Prostate gland (tissue), 2 donors: ENCODE measurements at regions of chr12 and their contacts with region 1.

Region 1: GRCh38 chr12:51531978-51532497 is 59.0 kb upstream of the SCN8A start:
- DNase-seq: peak; percentile 68
- H3K4me3 ChIP-seq: no peak overlapping the region
- H3K27ac ChIP-seq: no peak overlapping the region
- H3K4me1 ChIP-seq: no peaks in the 10 kb centered on the region
- H3K27me3 ChIP-seq: peaks cover 6% of the 10 kb centered on the region
- CTCF ChIP-seq: peak; percentile 61 to 86 (median 67)
- POLR2A ChIP-seq: no peak

Region 2: DNA sequence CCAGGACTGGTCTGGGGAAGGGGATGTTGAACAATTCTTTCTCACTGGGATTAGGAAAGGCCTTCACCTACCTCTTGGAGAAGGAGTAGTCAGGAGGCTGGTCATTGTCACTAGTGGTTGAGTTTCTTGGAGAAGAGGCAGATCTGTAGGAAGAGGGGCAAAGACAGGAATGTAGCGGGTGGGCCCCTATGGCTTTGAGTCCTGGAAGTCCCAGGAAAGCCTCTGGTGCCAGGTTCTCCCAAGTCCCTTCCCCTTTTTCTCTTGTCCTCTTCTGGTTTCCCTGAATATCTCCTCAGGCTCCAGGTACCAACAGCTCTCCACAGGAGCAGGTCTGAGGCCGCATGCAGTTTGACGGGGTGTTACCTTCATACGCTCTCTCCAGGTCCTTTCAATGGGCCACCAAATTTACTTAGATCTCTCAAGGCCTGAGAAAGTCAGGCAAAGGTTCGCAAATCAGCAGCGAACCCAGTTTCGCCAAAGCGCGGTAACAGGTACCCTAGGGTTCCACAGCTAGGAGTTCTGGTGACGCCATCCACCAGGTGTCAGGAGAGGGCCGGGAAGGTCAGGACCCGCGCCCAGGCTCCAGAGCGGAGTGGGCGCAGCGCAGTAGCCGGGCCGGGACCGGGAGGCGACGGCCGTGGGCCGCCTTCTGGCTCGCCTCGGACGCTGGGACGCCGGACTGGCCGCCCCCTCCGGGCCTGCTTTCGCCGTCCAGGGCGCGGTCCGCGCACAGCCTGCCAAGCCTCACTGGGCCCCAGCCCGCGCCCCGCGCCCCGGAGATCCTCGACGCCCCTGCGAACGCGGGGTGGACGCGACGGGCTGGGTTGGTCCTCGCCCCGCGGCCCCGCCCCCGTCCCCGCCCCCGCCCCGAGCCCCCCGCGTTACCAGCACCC is 262.6 kb before region 1 on chr12:
- intact Hi-C with region 1: loop called (anchors 10 kb)
- DNase-seq: peak; percentile 33
- H3K4me3 ChIP-seq: peak overlapping the region; percentile 58 to 69
- H3K27ac ChIP-seq: peak overlapping the region; percentile 64 to 71
- H3K4me1 ChIP-seq: no peaks in the 10 kb centered on the region
- H3K27me3 ChIP-seq: no peaks in the 10 kb centered on the region
- CTCF ChIP-seq: peak in 2 of 4 experiments; percentile 34 to 70
- POLR2A ChIP-seq: peak; percentile 12

Region 3: GRCh38 chr12:51424662-51425438 is 107.2 kb before region 1 on chr12 and contains the start of gene SLC4A8:
- intact Hi-C with region 1: loop called (anchors 5 kb)
- DNase-seq: peak; percentile 39
- H3K4me3 ChIP-seq: peak within 1 kb of the TSS; percentile 34 to 37
- H3K27ac ChIP-seq: no peak within 1 kb of the TSS
- H3K4me1 ChIP-seq: no peaks in the 10 kb centered on the region
- H3K27me3 ChIP-seq: no peaks in the 10 kb centered on the region
- CTCF ChIP-seq: peak; percentile 43 to 72 (median 56)
- POLR2A ChIP-seq: no peak
- total RNA-seq, gene SLC4A8: 0.50 to 10.5 TPM

Region 4: GRCh38 chr12:51471111-51471864 is 60.8 kb before region 1 on chr12:
- intact Hi-C with region 1: no loop called
- DNase-seq: no peak
- H3K4me3 ChIP-seq: no peak overlapping the region
- H3K27ac ChIP-seq: no peak overlapping the region
- H3K4me1 ChIP-seq: no peaks in the 10 kb centered on the region
- H3K27me3 ChIP-seq: no peaks in the 10 kb centered on the region
- CTCF ChIP-seq: no peak
- POLR2A ChIP-seq: no peak